ENCODE measurements at regions of chr4 and their contacts with region 1.

Region 1: GRCh38 chr4:77418333-77419038 is 187.1 kb upstream of the CXCL13 start:
- H3K4me3 ChIP-seq: no peak overlapping the region
- H3K27ac ChIP-seq: no peak overlapping the region
- H3K4me1 ChIP-seq: 0 out of 2 replicates have a peak, but pooled peaks cover 4% of the 10 kb centered on the region
- CTCF ChIP-seq: no peak

Region 2: DNA sequence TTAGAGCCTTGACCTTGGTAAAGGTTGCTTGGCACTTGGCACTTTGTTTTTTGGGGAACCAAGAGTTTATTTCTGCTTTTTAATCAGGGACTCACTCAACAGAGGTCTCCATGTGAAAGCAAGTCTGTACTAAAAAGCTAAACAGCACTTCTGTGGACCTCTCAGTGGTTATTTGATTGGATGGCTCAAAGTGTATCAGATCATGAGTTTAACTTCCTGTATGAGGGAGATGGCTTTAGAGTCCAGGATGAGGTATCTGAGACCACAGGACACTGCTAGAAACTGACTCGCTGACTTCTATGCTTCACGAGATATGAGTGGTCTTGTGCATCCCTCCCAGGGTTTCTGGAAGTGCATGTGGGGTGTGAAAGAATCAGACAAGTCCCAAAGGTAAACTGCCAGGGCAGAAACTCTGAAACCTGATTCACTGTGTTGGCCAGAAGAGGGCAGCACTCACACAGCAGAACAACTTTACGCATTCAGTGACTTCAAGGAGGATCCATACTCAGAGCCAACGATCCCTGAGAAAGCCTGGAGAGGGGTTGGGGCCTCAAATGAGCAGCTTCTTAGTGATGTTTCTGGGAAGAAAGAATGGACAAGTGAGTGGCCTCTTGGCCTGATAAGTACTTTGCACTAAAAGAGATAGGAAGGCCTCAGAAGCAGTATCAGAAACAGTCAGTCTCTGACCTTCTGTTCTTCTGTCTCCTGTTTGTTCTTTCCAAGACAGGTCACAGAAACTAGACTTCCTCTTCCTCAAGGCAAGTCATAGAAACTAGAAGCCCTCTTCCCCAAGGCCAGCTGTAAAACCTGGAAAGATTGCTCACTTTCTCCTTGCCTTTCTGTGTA is 33.1 kb before region 1 on chr4:
- CTCF ChIA-PET with region 1: interaction called, 17 read pairs
- POLR2A ChIA-PET with region 1: no interaction called
- H3K4me3 ChIP-seq: no peak overlapping the region
- H3K27ac ChIP-seq: no peak overlapping the region
- H3K4me1 ChIP-seq: no peaks in the 10 kb centered on the region
- CTCF ChIP-seq: peak; percentile 58

Region 3: DNA sequence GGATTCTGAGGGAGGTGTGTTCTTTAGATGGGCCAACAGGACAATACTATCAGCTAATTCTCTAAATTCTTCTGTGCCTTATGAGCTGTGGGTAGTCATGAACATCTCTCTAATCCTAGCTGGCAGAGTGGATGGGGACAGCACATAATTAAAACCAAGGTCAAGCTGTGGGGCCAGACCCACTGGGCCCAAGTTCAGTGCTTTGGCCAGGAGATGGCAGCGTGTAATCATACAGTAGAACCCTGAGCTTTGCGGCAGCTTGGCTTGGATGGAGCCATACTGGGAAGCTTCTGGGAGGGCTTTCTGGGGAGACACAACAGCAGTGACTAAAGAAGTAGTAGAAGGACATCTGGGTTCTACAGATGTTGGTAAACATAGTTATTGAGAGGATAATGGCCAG is 46.8 kb after region 1 on chr4:
- CTCF ChIA-PET with region 1: no interaction called
- POLR2A ChIA-PET with region 1: no interaction called
- H3K4me3 ChIP-seq: no peak overlapping the region
- H3K27ac ChIP-seq: no peak overlapping the region
- H3K4me1 ChIP-seq: no peaks in the 10 kb centered on the region
- CTCF ChIP-seq: 0 out of 2 replicates have a peak, but pooled peaks have one; percentile 15

Region 4: DNA sequence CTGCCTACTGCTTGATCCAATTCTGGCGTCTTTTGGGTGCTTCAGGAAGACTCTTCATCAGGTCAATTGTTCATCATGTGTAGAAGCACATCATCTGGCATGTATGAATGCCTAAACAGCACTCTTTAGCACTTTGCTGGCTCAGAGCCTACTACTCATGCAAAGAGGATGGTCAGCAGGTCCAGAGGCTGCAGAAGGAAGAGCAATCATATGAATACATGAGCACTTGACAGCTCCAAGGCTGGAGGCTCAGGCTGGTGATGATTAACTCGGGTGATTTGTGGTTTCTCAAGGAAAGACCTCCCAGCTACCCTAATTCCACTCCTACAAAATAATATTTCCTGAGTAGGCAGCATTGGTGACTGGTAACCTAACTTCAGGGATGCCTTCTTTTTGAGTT is 83.4 kb after region 1 on chr4:
- CTCF ChIA-PET with region 1: no interaction called
- POLR2A ChIA-PET with region 1: no interaction called
- H3K4me3 ChIP-seq: no peak overlapping the region
- H3K27ac ChIP-seq: no peak overlapping the region
- H3K4me1 ChIP-seq: no peaks in the 10 kb centered on the region
- CTCF ChIP-seq: no peak